ENCODE measurements at regions of chr9 and their contacts with region 1.

Region 1: DNA sequence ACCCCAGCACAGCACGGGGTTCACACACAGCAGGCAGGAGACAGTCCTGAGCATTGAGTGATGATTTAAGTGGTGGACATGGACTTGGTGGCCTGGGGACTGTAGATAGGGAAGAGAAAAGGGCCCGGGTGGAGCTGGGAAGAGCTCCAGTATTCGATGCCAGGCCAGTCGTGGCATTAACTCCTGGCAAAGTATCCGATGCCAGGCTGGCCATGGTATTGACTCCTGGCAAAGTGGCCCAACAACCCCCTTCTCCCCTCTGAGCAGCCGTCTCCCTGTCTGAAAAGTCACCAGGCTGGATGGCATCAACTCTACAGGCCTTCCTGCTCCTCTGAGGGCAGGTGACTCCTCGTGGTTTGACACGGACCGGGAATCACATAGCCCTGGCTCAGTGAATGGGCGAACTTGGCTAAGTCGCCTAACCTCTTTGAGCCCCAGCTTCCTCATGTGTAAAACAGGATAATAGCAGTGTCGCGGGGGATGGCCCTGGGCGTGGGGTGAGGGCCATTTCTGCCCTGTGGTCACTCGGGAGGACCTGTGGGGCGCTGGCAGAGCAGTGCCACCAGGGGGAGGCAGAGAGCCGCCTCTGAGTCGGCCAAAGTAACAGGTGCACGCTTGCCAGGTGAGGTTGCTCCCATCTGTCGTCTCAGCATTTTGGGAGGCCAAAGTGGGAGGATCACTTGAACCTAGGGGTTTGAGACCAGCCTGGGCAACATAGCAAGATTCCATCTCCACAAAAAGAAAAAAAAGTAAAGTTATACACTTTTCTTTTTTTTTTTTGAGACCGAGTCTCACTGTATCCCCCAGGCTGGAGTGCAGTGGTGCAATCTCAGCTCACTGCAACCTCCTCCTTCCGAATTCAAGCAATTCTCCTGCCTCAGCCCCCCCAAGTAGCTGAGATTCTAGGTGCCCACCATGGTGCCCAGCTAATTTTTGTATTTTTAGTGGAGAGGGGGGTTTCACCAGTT is 5.7 kb upstream of the SEC16A start:
- DNase-seq: peak; percentile 60 to 86 (median 72)
- ATAC-seq: peak; percentile 56
- H3K4me3 ChIP-seq: no peak overlapping the region
- H3K4me3 Mint-ChIP-seq: no peak overlapping the region
- H3K27ac ChIP-seq: no peak overlapping the region
- H3K27ac Mint-ChIP-seq: no peak overlapping the region
- H3K4me1 ChIP-seq: peaks cover 23% of the 10 kb centered on the region
- H3K4me1 Mint-ChIP-seq: peaks cover 7% of the 10 kb centered on the region
- H3K27me3 ChIP-seq: no peaks in the 10 kb centered on the region
- H3K27me3 Mint-ChIP-seq: no peaks in the 10 kb centered on the region
- CTCF ChIP-seq: peak; percentile 96

Region 2: DNA sequence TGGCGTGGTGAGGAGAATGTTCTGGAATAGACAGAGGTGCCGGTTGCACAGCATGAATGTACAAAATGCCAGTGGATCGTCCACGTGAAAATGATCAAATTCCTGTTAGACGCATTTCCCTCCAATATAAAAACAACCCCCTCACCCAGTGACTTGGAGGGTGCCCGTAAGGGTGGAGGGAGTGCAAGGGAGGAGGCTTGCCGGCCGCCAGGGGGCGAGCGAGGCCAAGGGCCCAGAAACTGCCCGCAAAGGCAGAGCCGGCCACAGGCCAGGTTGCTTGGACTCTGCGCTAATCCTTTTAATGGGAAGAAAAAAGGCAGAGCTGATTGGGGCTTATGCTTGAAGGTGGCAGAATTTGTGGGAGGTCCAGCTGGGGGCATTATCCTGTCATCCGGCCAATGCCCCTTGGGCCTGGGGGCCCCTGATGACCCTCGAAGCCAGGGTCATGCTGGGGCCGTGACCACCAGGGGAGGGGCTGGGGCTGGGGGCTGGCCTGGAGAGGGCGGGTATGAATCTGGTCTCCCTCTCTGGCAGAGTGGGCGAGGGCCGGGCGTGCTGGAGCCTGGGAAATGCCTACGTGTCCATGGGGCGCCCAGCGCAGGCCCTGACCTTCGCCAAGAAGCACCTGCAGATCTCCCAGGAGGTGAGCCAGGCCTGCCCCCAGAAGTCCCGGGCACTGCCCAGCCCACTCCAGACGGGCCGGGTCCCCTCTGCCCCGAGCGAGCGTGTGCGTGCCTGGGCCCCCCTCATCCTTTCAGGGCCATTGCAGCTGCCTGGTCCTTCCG is 149.2 kb before region 1 on chr9:
- CTCF ChIA-PET with region 1: no interaction called
- POLR2A ChIA-PET with region 1: no interaction called
- intact Hi-C with region 1: no loop called
- DNase-seq: peak in 9 of 14 experiments; percentile 19 to 61 (median 32)
- ATAC-seq: peak; percentile 36
- H3K4me3 ChIP-seq: no peak overlapping the region
- H3K4me3 Mint-ChIP-seq: no peak overlapping the region
- H3K27ac ChIP-seq: no peak overlapping the region
- H3K27ac Mint-ChIP-seq: no peak overlapping the region
- H3K4me1 ChIP-seq: peaks cover 4% of the 10 kb centered on the region
- H3K4me1 Mint-ChIP-seq: no peaks in the 10 kb centered on the region
- H3K27me3 ChIP-seq: no peaks in the 10 kb centered on the region
- H3K27me3 Mint-ChIP-seq: no peaks in the 10 kb centered on the region
- CTCF ChIP-seq: no peak

Region 3: GRCh38 chr9:136631038-136632000 is 142.8 kb after region 1 on chr9:
- CTCF ChIA-PET with region 1: interaction called, 9 read pairs
- POLR2A ChIA-PET with region 1: interaction called, 6 read pairs
- intact Hi-C with region 1: loop called (anchors 1 kb)
- DNase-seq: peak; percentile 74 to 91 (median 80)
- ATAC-seq: peak; percentile 88
- H3K4me3 ChIP-seq: no peak overlapping the region
- H3K4me3 Mint-ChIP-seq: no peak overlapping the region
- H3K27ac ChIP-seq: no peak overlapping the region
- H3K27ac Mint-ChIP-seq: no peak overlapping the region
- H3K4me1 ChIP-seq: peaks cover 27% of the 10 kb centered on the region
- H3K4me1 Mint-ChIP-seq: no peaks in the 10 kb centered on the region
- H3K27me3 ChIP-seq: no peaks in the 10 kb centered on the region
- H3K27me3 Mint-ChIP-seq: peaks cover 3% of the 10 kb centered on the region
- CTCF ChIP-seq: peak; percentile 76

Measured in CD4-positive, alpha-beta T cell (primary cell).